Vagina (tissue), 2 donors: ENCODE measurements at regions of chr9 and their contacts with region 1.

Region 1: DNA sequence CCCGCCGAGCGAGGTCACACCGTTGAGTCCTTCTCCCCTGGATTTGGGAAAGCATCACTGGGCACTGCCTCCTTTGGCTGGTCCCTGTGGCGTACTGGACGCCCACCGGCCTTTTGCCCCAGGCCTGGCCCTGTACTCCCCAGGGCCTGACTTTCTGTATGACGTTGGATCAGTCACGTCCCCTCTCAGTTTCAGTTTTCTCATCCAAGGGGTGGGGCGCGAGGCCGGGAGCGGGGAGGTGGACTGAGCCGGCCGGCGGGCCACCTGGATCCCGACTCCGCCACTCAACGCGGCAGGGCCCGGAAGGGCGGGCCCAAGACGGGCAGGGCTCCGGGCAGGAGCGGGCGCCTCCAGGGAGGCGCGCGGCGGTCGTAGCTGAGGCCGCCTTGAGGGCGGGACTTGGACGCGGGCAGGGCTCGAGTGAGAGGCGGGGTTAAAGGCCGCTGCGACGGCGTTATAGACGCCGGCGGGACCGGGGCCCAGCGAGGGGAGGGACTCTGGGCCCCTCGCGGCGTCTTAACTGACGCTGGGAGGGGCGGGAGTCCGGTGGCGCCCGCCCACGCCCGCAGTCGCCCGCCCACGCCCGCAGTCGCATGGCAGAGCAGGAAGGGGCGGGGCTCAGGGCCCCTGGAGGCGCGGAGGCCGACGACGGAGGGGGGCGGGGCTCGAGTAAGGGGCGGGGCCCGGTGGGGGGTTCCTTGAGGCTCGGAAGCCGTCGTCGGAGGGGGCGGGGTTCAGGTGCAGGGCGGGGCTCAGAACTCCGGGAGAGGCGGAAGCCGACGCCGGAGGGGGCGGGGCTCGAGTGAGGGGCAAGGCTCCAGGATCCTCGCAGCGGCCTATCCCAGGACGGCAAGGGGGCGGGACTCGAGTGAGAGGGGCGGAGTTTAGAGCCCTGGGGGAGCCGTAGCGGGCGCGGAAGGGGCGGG is 549 bp upstream of the CARD19 start:
- DNase-seq: peak in 1 of 2 donors; percentile 100
- H3K4me3 ChIP-seq: peak overlapping the region; percentile 86 to 99
- H3K27ac ChIP-seq: peak overlapping the region; percentile 99
- H3K4me1 ChIP-seq: peaks cover 62% of the 10 kb centered on the region
- H3K27me3 ChIP-seq: no peaks in the 10 kb centered on the region
- CTCF ChIP-seq: no peak
- POLR2A ChIP-seq: peak in 1 of 2 donors; percentile 70

Region 2: GRCh38 chr9:93134740-93135444 is 39.4 kb after region 1 on chr9:
- intact Hi-C with region 1: loop called (anchors 1 kb)
- DNase-seq: peak in 1 of 2 donors; percentile 86
- H3K4me3 ChIP-seq: peak overlapping the region; percentile 85 to 95
- H3K27ac ChIP-seq: peak overlapping the region; percentile 99
- H3K4me1 ChIP-seq: peaks cover 70% of the 10 kb centered on the region
- H3K27me3 ChIP-seq: no peaks in the 10 kb centered on the region
- CTCF ChIP-seq: no peak
- POLR2A ChIP-seq: no peak

Region 3: GRCh38 chr9:93231121-93231694 is 135.7 kb after region 1 on chr9:
- intact Hi-C with region 1: no loop called
- DNase-seq: no peak
- H3K4me3 ChIP-seq: no peak overlapping the region
- H3K27ac ChIP-seq: no peak overlapping the region
- H3K4me1 ChIP-seq: peaks cover 6% of the 10 kb centered on the region
- H3K27me3 ChIP-seq: no peaks in the 10 kb centered on the region
- CTCF ChIP-seq: no peak
- POLR2A ChIP-seq: no peak

Region 4: GRCh38 chr9:93319992-93320500 is 224.6 kb after region 1 on chr9:
- intact Hi-C with region 1: no loop called
- DNase-seq: no peak
- H3K4me3 ChIP-seq: no peak overlapping the region
- H3K27ac ChIP-seq: no peak overlapping the region
- H3K4me1 ChIP-seq: no peaks in the 10 kb centered on the region
- H3K27me3 ChIP-seq: no peaks in the 10 kb centered on the region
- CTCF ChIP-seq: no peak
- POLR2A ChIP-seq: no peak